Activated T-helper 2 cell treated with anti-CD3 and anti-CD28 coated beads, Interferon-gamma antibody, Interleukin-2, Interleukin-4, amounts not matched to agents 10 μg/mL and 5 μg/mL and 100 μg/mL, durations not matched to agents 14 hours and 24 hours and 36 hours (primary cell): ENCODE measurements at regions of chr5 and their contacts with region 1.

Region 1: DNA sequence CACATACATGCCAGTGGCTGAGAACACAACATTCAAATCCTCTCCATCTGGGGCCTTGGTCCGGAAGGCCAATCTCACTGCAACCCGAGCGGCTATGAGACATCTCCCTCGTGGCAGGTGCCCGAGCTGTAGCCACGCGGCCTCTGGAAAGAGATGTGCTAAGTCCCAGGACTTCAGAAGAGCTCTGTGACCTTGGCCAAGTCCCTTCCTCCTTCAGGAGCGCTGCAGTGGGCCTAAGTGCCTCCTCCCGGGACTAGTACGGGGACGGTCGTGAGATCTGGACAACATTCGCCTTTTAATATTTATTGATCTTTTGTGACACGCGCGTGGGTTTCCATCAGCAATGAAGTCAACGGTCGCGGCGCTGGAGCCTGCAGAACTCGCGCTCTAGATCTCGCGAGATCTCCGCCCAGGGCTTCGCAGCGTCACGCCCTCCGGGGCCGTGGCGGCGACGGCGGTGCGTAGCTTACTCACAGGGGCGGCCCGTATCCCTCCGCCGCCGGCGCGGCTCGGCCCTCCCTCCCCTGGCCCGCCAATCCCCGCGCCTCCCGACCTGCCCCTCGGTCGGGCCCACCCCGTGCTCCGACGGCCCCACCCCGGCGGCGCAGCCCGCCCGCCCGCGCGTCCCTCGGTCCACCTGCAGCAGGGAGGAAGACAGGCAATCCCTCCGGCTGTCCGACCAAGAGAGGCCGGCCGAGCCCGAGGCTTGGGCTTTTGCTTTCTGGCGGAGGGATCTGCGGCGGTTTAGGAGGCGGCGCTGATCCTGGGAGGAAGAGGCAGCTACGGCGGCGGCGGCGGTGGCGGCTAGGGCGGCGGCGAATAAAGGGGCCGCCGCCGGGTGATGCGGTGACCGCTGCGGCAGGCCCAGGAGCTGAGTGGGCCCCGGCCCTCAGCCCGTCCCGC is at the start of gene UBE2D2:
- DNase-seq: peak; percentile 96
- H3K4me3 Mint-ChIP-seq: peak within 1 kb of the TSS; percentile 93
- H3K27ac Mint-ChIP-seq: peak within 1 kb of the TSS; percentile 98
- H3K4me1 Mint-ChIP-seq: peaks cover 32% of the 10 kb centered on the region
- H3K27me3 Mint-ChIP-seq: no peaks in the 10 kb centered on the region
- total RNA-seq, gene UBE2D2: 249 and 262 TPM in 2 replicates

Region 2: GRCh38 chr5:139293504-139294373 is 267.3 kb before region 1 on chr5 and contains the start of gene MATR3:
- intact Hi-C with region 1: loop called (anchors 10 kb)
- DNase-seq: peak; percentile 90
- H3K4me3 Mint-ChIP-seq: peak within 1 kb of the TSS; percentile 91
- H3K27ac Mint-ChIP-seq: peak within 1 kb of the TSS; percentile 97
- H3K4me1 Mint-ChIP-seq: peaks cover 33% of the 10 kb centered on the region
- H3K27me3 Mint-ChIP-seq: no peaks in the 10 kb centered on the region
- total RNA-seq, gene MATR3: 259 TPM in 2 replicates

Region 3: GRCh38 chr5:139417214-139417613 is 143.8 kb before region 1 on chr5:
- intact Hi-C with region 1: loop called (anchors 2 kb)
- DNase-seq: no peak
- H3K4me3 Mint-ChIP-seq: no peak overlapping the region
- H3K27ac Mint-ChIP-seq: peak overlapping the region; percentile 97
- H3K4me1 Mint-ChIP-seq: peaks cover 59% of the 10 kb centered on the region
- H3K27me3 Mint-ChIP-seq: no peaks in the 10 kb centered on the region

Region 4: GRCh38 chr5:139482050-139482889 is 78.7 kb before region 1 on chr5 and contains the start of gene STING1:
- intact Hi-C with region 1: loop called (anchors 2 kb)
- DNase-seq: peak; percentile 55
- H3K4me3 Mint-ChIP-seq: peak within 1 kb of the TSS; percentile 88
- H3K27ac Mint-ChIP-seq: peak within 1 kb of the TSS; percentile 99
- H3K4me1 Mint-ChIP-seq: peaks cover 30% of the 10 kb centered on the region
- H3K27me3 Mint-ChIP-seq: no peaks in the 10 kb centered on the region
- total RNA-seq, gene STING1: 167 and 169 TPM in 2 replicates

Region 5: GRCh38 chr5:139492700-139493192 is 68.3 kb before region 1 on chr5:
- intact Hi-C with region 1: no loop called
- DNase-seq: no peak
- H3K4me3 Mint-ChIP-seq: no peak overlapping the region
- H3K27ac Mint-ChIP-seq: no peak overlapping the region
- H3K4me1 Mint-ChIP-seq: peaks cover 33% of the 10 kb centered on the region
- H3K27me3 Mint-ChIP-seq: no peaks in the 10 kb centered on the region

Region 6: DNA sequence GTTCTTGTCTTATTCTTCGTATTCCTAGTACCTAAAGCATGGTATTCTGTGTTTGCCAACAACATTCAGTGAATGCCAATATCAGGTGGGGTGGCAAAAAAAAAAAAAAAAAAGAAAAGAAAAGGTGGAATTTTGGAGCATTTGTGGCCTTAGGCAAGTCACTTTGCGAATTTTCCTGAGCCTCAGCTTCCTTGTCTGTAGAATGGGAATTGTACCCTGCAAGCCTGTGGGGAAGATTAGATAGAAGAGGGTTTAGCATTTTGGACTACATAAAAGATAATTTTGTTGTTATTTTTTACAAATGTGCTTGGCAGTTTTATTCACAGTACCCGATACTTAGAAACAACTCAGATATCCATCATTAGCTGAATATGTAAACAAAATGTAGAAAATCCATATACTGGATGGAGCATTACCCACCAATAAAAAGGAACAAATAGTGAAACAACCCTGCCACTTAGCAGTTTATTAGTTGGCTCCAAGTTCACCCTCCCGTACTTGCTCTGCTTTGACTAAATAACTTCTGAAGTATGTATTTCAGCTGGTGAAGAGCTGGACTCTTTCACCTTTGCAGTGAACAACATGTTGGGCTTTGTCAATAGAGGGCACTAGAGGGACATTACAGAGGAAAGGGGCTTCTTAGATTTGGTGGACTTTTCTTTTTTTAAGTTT is 13.8 kb after region 1 on chr5:
- intact Hi-C with region 1: loop called (anchors 1 kb)
- DNase-seq: no peak
- H3K4me3 Mint-ChIP-seq: peak overlapping the region; percentile 24
- H3K27ac Mint-ChIP-seq: peak overlapping the region; percentile 72
- H3K4me1 Mint-ChIP-seq: peaks cover 54% of the 10 kb centered on the region
- H3K27me3 Mint-ChIP-seq: no peaks in the 10 kb centered on the region

Region 7: GRCh38 chr5:140113699-140114263 is 552.8 kb after region 1 on chr5 and contains the start of gene PURA:
- intact Hi-C with region 1: loop called (anchors 5 kb)
- DNase-seq: peak; percentile 94
- H3K4me3 Mint-ChIP-seq: peak within 1 kb of the TSS; percentile 92
- H3K27ac Mint-ChIP-seq: peak within 1 kb of the TSS; percentile 85
- H3K4me1 Mint-ChIP-seq: peaks cover 50% of the 10 kb centered on the region
- H3K27me3 Mint-ChIP-seq: peaks cover 25% of the 10 kb centered on the region
- total RNA-seq, gene PURA: 10.8 and 11.0 TPM in 2 replicates

Region 8: GRCh38 chr5:140189977-140190871 is 629.2 kb after region 1 on chr5:
- intact Hi-C with region 1: no loop called
- DNase-seq: no peak
- H3K4me3 Mint-ChIP-seq: no peak overlapping the region
- H3K27ac Mint-ChIP-seq: no peak overlapping the region
- H3K4me1 Mint-ChIP-seq: no peaks in the 10 kb centered on the region
- H3K27me3 Mint-ChIP-seq: peaks cover 11% of the 10 kb centered on the region